Transverse colon (tissue), 4 donors: ENCODE measurements at regions of chr3 and their contacts with region 1.

Region 1: GRCh38 chr3:4099607-4100006 is 203.6 kb upstream of the SETMAR start:
- DNase-seq: no peak
- H3K4me3 ChIP-seq: no peak overlapping the region
- H3K27ac ChIP-seq: no peak overlapping the region
- H3K4me1 ChIP-seq: no peaks in the 10 kb centered on the region
- H3K27me3 ChIP-seq: no peaks in the 10 kb centered on the region
- CTCF ChIP-seq: no peak
- EP300 ChIP-seq: no peak
- POLR2A ChIP-seq: no peak

Region 2: DNA sequence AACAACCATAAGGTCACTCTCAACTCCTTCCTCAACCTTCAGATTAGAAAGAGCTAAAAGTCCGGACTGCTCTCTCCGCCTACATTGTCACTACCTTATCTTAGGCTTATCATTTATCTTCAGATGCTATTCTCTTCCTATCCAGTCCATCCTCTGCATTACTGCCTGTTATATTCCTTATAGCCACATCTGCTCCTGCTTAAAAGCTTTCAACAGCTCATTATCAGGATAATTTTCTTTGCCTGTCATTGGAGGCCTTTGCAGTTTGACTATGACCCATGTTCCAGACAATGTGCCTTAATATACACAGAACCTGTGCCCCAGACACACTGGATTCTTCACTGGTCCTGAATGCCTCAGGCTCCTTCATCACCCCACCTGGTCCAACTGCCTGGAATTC is 19.5 kb after region 1 on chr3:
- in situ Hi-C with region 1: no loop called
- intact Hi-C with region 1: loop called (anchors 2 kb)
- DNase-seq: no peak
- H3K4me3 ChIP-seq: no peak overlapping the region
- H3K27ac ChIP-seq: no peak overlapping the region
- H3K4me1 ChIP-seq: no peaks in the 10 kb centered on the region
- H3K27me3 ChIP-seq: no peaks in the 10 kb centered on the region
- CTCF ChIP-seq: no peak
- EP300 ChIP-seq: no peak
- POLR2A ChIP-seq: no peak